ENCODE measurements at regions of chr1 and their contacts with region 1.

Region 1: GRCh38 chr1:55021965-55022546 is 17.3 kb upstream of the PCSK9 start:
- DNase-seq: peak; percentile 51
- H3K4me3 ChIP-seq: no peak overlapping the region
- H3K27ac ChIP-seq: no peak overlapping the region
- H3K4me1 ChIP-seq: no peaks in the 10 kb centered on the region
- CTCF ChIP-seq: peak; percentile 85

Region 2: GRCh38 chr1:54944610-54945544 is 77.2 kb before region 1 on chr1:
- CTCF ChIA-PET with region 1: interaction called, 6 read pairs
- POLR2A ChIA-PET with region 1: no interaction called
- intact Hi-C with region 1: loop called (anchors 1 kb)
- DNase-seq: peak; percentile 75
- H3K4me3 ChIP-seq: no peak overlapping the region
- H3K27ac ChIP-seq: no peak overlapping the region
- H3K4me1 ChIP-seq: no peaks in the 10 kb centered on the region
- CTCF ChIP-seq: peak; percentile 93

Region 3: DNA sequence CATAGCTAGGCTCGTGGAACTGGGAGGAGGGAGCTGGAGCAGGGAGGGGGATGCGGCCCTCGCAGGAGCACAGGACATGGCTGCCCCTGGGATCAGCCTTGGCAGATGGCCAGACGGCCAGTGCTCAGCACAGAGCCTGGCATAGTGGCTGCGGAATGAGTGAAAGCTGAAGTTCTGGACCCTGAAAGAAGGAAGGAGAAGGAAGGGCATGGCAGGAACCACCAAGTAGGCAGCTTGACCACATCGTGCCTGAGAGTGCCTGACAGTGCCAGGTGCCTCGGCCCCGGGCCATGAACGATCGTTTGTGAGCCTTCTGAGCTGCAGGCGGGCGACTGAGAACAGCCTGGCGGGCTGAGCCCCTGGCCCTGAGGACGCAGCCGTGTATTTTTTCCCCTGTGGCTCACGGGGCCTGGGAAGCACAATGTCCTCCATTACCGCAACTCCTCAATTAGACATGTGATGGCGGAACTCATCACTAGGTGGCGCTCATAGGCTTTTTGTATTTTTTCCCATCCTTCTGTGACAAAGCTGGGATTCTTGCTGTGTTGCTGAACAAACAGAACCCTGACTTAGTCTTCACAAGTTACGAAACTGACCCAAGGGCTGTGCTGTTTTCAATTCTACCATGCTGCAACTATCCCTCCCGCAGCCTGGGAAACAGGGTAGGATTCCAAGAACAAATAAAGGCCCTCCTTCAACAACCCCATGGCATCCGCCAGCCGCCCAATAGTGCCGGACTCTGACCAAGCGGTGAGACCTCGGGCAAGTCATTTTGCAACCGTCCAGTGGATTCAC is 71.5 kb before region 1 on chr1:
- CTCF ChIA-PET with region 1: no interaction called
- POLR2A ChIA-PET with region 1: no interaction called
- intact Hi-C with region 1: loop called (anchors 1 kb)
- DNase-seq: peak; percentile 36
- H3K4me3 ChIP-seq: no peak overlapping the region
- H3K27ac ChIP-seq: no peak overlapping the region
- H3K4me1 ChIP-seq: no peaks in the 10 kb centered on the region
- CTCF ChIP-seq: peak; percentile 81

Region 4: GRCh38 chr1:55310505-55310971 is 288.5 kb after region 1 on chr1:
- CTCF ChIA-PET with region 1: no interaction called
- POLR2A ChIA-PET with region 1: no interaction called
- intact Hi-C with region 1: no loop called
- DNase-seq: no peak
- H3K4me3 ChIP-seq: no peak overlapping the region
- H3K27ac ChIP-seq: no peak overlapping the region
- H3K4me1 ChIP-seq: no peaks in the 10 kb centered on the region
- CTCF ChIP-seq: no peak

Measured in OCI-LY7 (cell line).